HepG2 (cell line): ENCODE measurements at regions of chr3 and their contacts with region 1.

Region 1: DNA sequence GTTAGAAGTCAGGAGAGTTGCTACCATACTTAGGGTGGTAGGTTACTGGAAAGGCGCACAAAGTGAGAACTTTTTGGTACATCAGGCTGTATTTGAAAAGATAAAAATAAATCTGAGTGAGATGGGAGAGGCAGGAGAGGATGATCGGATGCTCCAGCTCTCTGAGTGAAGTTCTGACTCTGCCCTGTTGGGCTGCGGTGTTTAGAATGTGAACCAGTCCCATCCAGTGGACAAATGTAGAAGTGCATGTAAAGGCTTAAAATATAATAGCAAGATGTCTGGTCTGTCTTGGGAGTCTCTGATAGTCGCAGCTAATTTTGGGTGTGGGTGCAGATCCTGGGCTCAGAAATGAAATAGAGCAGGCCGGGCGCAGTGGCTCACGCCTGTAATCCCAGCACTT is 30.4 kb downstream of the ACKR2 start:
- DNase-seq: peak; percentile 73
- ATAC-seq: peak; percentile 98
- H3K4me3 ChIP-seq: no peak overlapping the region
- H3K27ac ChIP-seq: no peak overlapping the region
- H3K4me1 ChIP-seq: peaks cover 41% of the 10 kb centered on the region
- H3K27me3 ChIP-seq: no peaks in the 10 kb centered on the region
- CTCF ChIP-seq: peak; percentile 70
- EP300 ChIP-seq: no peak
- POLR2A ChIP-seq: no peak
- RAD21 ChIP-seq: peak; percentile 77

Region 2: GRCh38 chr3:42247576-42248027 is 592.0 kb before region 1 on chr3:
- CTCF ChIA-PET with region 1: no interaction called
- POLR2A ChIA-PET with region 1: no interaction called
- in situ Hi-C with region 1: loop called (anchors 25 kb)
- intact Hi-C with region 1: loop called (anchors 5 kb)
- DNase-seq: peak; percentile 59
- ATAC-seq: peak; percentile 85
- H3K4me3 ChIP-seq: 0 out of 6 replicates have a peak overlapping the region, but pooled peaks of 1 of the 3 experiments have one; percentile 12
- H3K27ac ChIP-seq: no peak overlapping the region
- H3K4me1 ChIP-seq: no peaks in the 10 kb centered on the region
- H3K27me3 ChIP-seq: peaks cover 0 to 22% of the 10 kb centered on the region in 2 experiments; a peak in 3 of 5 replicates
- CTCF ChIP-seq: peak; percentile 82
- EP300 ChIP-seq: no peak
- POLR2A ChIP-seq: no peak
- RAD21 ChIP-seq: peak; percentile 81

Region 3: GRCh38 chr3:42780892-42781700 is 58.5 kb before region 1 on chr3:
- CTCF ChIA-PET with region 1: interaction called, 12 read pairs
- POLR2A ChIA-PET with region 1: no interaction called
- in situ Hi-C with region 1: loop called (anchors 5 kb)
- intact Hi-C with region 1: no loop called
- DNase-seq: peak; percentile 68
- ATAC-seq: peak; percentile 84
- H3K4me3 ChIP-seq: no peak overlapping the region
- H3K27ac ChIP-seq: no peak overlapping the region
- H3K4me1 ChIP-seq: peaks cover 16% of the 10 kb centered on the region
- H3K27me3 ChIP-seq: no peaks in the 10 kb centered on the region
- CTCF ChIP-seq: peak; percentile 78
- EP300 ChIP-seq: no peak
- POLR2A ChIP-seq: no peak
- RAD21 ChIP-seq: peak; percentile 78